ENCODE measurements at regions of chr16 and their contacts with region 1.

Region 1: DNA sequence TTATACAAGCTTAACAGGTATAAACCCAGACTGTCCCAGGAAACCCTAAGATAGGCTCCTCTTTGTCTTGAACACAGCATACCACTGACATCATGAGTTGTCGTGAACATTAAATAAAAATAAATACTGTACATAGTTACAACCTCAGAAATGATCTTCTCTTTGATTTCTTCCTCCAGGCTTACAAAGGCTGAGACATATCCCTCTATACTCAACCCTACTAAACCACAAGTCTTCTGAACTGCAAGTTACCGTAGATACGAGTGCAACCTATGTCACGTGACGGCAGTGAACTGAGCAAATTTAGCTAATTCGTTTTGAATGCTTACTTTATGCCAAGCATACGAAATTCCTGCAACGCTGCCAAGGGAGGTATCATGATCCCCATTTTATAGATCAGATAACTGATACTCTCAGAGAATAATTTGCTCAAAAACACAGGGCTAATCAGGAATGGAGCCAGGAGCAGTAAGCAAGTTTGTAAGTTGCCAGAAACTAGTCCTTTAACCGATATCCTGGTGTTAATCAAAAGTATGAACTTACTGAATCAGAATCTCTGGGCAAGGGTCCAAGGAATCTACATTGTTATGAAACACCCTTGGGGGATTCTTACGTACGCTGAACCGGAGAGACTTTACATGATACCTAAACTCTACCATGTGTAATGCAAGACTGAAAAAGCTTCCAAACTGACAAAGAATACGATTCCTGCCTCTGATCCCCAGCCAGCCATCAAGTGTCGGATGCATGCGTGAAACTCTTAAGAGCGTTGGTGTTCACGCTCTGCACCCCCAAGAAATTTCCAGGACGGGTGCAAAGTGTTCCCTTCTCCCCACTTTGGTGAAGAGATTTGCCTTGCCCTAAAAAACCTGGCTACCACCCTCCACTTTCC is 106.2 kb downstream of the XYLT1 start:
- DNase-seq: peak; percentile 73
- ATAC-seq: peak; percentile 78
- H3K4me3 Mint-ChIP-seq: peak overlapping the region; percentile 54
- H3K27ac Mint-ChIP-seq: peak overlapping the region; percentile 72
- H3K4me1 Mint-ChIP-seq: peaks cover 97% of the 10 kb centered on the region
- H3K27me3 Mint-ChIP-seq: no peaks in the 10 kb centered on the region

Region 2: GRCh38 chr16:17277977-17278381 is 86.6 kb before region 1 on chr16:
- CTCF ChIA-PET with region 1: no interaction called
- POLR2A ChIA-PET with region 1: no interaction called
- intact Hi-C with region 1: loop called (anchors 5 kb)
- DNase-seq: peak; percentile 20
- ATAC-seq: no peak
- H3K4me3 Mint-ChIP-seq: no peak overlapping the region
- H3K27ac Mint-ChIP-seq: no peak overlapping the region
- H3K4me1 Mint-ChIP-seq: peaks cover 31% of the 10 kb centered on the region
- H3K27me3 Mint-ChIP-seq: no peaks in the 10 kb centered on the region

Region 3: GRCh38 chr16:17346621-17347569 is 17.7 kb before region 1 on chr16:
- CTCF ChIA-PET with region 1: interaction called, 11 read pairs
- POLR2A ChIA-PET with region 1: no interaction called
- intact Hi-C with region 1: loop called in 1 of 2 experiments (anchors 2 kb)
- DNase-seq: peak; percentile 41
- ATAC-seq: peak; percentile 34
- H3K4me3 Mint-ChIP-seq: no peak overlapping the region
- H3K27ac Mint-ChIP-seq: peak overlapping the region; percentile 81
- H3K4me1 Mint-ChIP-seq: peaks cover 62% of the 10 kb centered on the region
- H3K27me3 Mint-ChIP-seq: no peaks in the 10 kb centered on the region

Measured in activated CD4-positive, alpha-beta T cell treated with anti-CD3 and anti-CD28 coated beads for 36 hours (primary cell).